Activated naive CD4-positive, alpha-beta T cell treated with anti-CD3 and anti-CD28 coated beads, Interleukin-2, amount 10 ng/mL, durations not matched to agents 7 days and 5 days (primary cell): ENCODE measurements at regions of chr1 and their contacts with region 1.

Region 1: DNA sequence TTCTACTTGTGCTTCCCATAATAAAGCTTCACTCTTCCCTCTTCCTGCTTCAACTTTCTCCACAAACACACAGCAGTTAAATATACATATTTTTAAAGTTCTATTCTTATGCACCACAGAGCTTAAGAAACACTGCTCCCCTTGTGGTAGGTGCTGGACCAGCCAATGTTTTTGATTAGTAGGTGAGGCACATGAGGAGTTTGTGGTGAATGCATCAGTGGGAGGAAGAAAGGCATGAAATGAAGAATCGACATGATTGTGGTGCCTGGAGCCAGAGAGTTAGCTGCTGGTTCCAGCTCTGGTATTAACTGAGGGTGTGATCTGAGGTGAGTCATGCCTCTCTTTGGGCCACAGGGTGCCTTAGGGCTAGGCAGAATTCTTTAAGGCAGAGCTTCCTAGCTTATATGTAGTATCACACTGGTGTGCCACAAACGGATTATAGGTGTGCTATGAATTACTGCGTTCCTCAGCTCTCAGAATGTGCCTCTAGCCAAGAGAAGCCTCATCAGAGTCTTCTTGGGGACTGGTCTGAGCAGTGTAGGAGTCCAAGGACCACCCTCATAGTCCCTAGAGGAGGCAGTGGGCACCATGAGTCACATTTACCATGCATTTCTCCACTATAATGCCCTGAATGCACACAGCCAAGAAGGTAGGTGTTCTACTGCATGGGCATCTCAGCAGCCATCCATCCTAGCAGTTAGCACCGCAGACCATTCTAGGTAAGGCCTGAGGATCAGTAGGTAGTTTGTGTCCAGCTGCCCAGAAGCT is 97.4 kb upstream of the SGIP1 start:
- DNase-seq: peak; percentile 56
- H3K4me3 Mint-ChIP-seq: no peak overlapping the region
- H3K27ac Mint-ChIP-seq: peak overlapping the region; percentile 24
- H3K4me1 Mint-ChIP-seq: peaks cover 37% of the 10 kb centered on the region
- H3K27me3 Mint-ChIP-seq: peaks cover 10% of the 10 kb centered on the region

Region 2: GRCh38 chr1:66197785-66198184 is 238.8 kb before region 1 on chr1:
- CTCF ChIA-PET with region 1: no interaction called
- DNase-seq: no peak
- H3K4me3 Mint-ChIP-seq: no peak overlapping the region
- H3K27ac Mint-ChIP-seq: no peak overlapping the region
- H3K4me1 Mint-ChIP-seq: no peaks in the 10 kb centered on the region
- H3K27me3 Mint-ChIP-seq: peaks cover 6% of the 10 kb centered on the region

Region 3: DNA sequence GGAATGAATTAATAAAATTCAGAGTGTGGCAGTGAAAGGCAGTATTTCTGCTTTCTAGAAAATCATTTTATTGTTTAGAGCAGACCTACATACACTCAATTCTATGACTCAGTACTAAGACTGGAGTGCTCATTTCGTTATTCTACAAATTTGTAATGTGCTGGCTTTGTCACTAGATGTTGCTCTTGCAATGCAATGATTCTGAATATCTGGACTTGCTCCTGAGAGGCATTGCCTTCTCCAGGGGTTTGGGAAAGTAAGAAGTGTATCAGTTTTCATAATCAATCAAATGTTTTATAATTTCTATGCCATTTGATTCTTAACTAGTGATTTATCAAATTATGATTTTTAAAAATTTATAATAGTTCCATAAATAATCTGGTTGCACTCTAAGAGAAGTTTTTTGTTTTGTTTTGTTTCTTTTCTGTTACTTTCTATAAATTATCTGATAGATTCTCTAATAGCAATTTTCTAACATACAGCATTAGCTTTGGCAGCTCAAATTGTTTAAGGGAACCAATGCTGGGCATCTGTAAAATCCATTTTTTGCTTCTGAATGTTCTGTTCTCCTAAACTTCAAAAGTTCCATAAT is 183.1 kb before region 1 on chr1:
- CTCF ChIA-PET with region 1: interaction called, 28 read pairs
- DNase-seq: no peak
- H3K4me3 Mint-ChIP-seq: no peak overlapping the region
- H3K27ac Mint-ChIP-seq: no peak overlapping the region
- H3K4me1 Mint-ChIP-seq: peaks cover 58% of the 10 kb centered on the region
- H3K27me3 Mint-ChIP-seq: no peaks in the 10 kb centered on the region

Region 4: GRCh38 chr1:66282343-66282852 is 154.2 kb before region 1 on chr1:
- CTCF ChIA-PET with region 1: interaction called, 11 read pairs
- DNase-seq: peak; percentile 77
- H3K4me3 Mint-ChIP-seq: no peak overlapping the region
- H3K27ac Mint-ChIP-seq: peak overlapping the region; percentile 90
- H3K4me1 Mint-ChIP-seq: peaks cover 92% of the 10 kb centered on the region
- H3K27me3 Mint-ChIP-seq: no peaks in the 10 kb centered on the region

Region 5: DNA sequence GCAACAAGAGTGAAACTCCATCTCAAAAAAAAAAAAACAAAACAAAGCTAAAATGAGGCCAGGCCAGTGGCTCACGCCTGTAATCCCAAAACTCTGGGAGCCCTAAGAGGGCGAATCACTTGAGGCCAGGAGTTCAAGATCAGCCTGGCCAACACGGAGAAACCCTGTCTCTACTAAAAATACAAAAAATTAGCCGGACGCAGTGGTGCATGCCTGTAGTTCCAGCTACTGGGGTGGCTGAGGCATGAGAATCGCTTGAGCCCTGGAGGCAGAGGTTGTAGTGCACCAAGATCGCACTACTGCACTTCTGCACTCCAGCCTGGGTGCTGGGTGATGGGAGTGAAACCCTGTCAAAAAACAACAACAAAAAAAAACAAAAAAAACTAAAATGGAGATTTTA is 93.9 kb before region 1 on chr1:
- CTCF ChIA-PET with region 1: interaction called, 21 read pairs
- DNase-seq: no peak
- H3K4me3 Mint-ChIP-seq: no peak overlapping the region
- H3K27ac Mint-ChIP-seq: no peak overlapping the region
- H3K4me1 Mint-ChIP-seq: peaks cover 84% of the 10 kb centered on the region
- H3K27me3 Mint-ChIP-seq: no peaks in the 10 kb centered on the region

Region 6: DNA sequence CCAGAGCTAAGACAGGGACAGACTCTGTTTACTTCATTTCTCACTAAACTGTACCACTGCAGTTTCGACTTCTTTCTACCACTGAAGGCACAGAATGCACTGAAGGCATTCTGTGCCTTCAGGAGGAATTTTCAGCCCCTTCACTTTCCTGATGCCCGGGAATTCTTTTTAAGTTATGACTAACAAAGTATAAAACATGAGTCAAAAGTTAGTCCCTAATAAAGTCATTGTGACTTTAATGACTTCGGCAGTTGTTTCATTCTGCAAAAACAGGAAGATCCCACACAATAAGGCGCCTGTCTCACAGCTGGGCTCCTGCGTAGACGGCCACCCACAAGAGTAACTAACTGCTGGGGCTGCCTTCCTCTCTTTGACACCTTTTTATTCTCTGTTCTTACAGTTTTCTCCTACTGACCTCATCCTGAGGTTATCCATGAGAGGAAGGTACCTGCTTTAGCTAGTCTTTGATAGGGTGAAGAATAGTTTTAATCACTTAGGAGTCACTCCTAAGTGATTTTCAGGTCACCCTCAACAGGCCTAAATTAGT is 86.5 kb before region 1 on chr1:
- CTCF ChIA-PET with region 1: interaction called, 21 read pairs
- DNase-seq: peak; percentile 62
- H3K4me3 Mint-ChIP-seq: peak overlapping the region; percentile 75
- H3K27ac Mint-ChIP-seq: peak overlapping the region; percentile 95
- H3K4me1 Mint-ChIP-seq: peaks cover 95% of the 10 kb centered on the region
- H3K27me3 Mint-ChIP-seq: no peaks in the 10 kb centered on the region

Region 7: DNA sequence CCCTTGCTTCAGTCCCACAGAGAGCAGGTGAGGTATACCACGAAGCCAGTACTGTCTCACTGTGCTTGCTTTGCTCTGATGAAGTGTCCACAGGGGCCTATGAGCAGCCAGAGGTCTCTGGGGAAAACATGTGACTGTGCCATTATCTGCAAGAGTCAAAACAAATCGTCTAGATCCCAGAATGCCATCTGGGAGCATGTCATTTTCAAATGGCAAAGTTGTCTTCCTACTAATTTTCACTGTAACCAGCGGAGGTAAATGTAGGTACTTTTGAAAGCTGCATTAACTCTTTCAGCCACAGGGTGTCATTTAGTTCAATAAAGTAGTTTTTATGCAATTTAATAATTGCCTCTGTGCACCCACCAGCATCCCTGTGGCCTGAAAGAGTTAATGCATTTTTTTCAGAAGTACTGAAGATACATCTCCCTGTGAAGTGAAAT is 76.3 kb before region 1 on chr1:
- CTCF ChIA-PET with region 1: interaction called, 20 read pairs
- DNase-seq: no peak
- H3K4me3 Mint-ChIP-seq: no peak overlapping the region
- H3K27ac Mint-ChIP-seq: peak overlapping the region; percentile 43
- H3K4me1 Mint-ChIP-seq: peaks cover 82% of the 10 kb centered on the region
- H3K27me3 Mint-ChIP-seq: no peaks in the 10 kb centered on the region

Region 8: DNA sequence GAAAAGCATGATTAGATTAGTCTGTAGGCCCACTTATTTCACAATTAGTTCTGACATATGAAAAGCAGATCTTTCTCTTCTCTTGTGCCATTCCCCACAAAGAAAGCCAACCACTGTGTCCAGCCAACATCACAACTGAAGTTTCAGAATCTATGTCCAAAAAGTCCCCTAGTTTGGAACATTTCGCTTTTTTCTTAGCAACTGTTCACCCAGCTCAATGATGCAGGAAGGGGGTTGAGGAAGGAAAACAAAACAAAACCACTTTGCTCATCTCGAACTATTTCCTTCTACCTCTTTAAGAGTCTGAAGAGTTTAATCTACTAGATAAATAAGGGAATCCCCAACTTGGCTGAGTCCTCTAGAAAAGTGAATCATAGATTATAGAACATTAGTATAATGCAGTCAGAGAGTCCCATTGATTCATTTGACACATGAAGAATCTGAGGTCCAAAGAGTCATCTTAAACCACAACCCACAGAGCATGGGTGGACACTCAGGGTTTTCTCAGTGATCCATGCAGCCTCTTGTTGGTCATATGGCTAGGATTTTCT is 61.9 kb before region 1 on chr1:
- CTCF ChIA-PET with region 1: interaction called, 16 read pairs
- DNase-seq: no peak
- H3K4me3 Mint-ChIP-seq: peak overlapping the region; percentile 24
- H3K27ac Mint-ChIP-seq: peak overlapping the region; percentile 86
- H3K4me1 Mint-ChIP-seq: peaks cover 58% of the 10 kb centered on the region
- H3K27me3 Mint-ChIP-seq: no peaks in the 10 kb centered on the region